K562 (cell line): ENCODE measurements at regions of chr10 and their contacts with region 1.

Region 1: GRCh38 chr10:30013757-30014156 is 45.6 kb downstream of the JCAD start:
- DNase-seq: no peak
- ATAC-seq: no peak
- H3K4me3 ChIP-seq: no peak overlapping the region
- H3K27ac ChIP-seq: no peak overlapping the region
- H3K4me1 ChIP-seq: no peaks in the 10 kb centered on the region
- H3K27me3 ChIP-seq: peaks cover 31 to 32% of the 10 kb centered on the region in 2 experiments; a peak in 4 of 5 replicates
- CTCF ChIP-seq: no peak
- EP300 ChIP-seq: no peak
- POLR2A ChIP-seq: no peak
- RAD21 ChIP-seq: no peak

Region 2: DNA sequence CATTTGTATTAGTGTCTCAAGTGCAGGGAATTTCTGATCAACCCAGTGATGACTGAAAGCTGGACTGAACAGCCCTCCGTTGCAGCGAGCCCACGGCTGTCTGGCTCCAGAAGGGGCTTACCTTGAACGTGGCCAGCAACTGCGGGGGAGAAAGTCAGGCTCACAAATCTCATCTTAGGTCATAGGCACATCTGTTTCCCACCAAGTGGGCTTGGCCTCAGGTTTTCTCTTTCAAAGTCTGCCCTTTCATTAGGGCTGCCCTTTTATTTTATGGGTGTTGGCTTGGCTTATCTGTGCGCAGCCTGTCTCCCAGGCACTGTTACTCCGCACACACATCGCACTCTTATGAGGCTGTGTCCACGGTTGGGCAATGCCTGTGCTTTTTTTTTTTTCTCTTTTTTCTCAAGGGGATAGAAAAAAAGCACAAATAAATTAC is 132.4 kb before region 1 on chr10:
- CTCF ChIA-PET with region 1: no interaction called
- POLR2A ChIA-PET with region 1: no interaction called
- in situ Hi-C with region 1: no loop called
- intact Hi-C with region 1: no loop called
- DNase-seq: no peak
- ATAC-seq: no peak
- H3K4me3 ChIP-seq: no peak overlapping the region
- H3K27ac ChIP-seq: no peak overlapping the region
- H3K4me1 ChIP-seq: no peaks in the 10 kb centered on the region
- H3K27me3 ChIP-seq: peaks cover 0 to 25% of the 10 kb centered on the region in 2 experiments; a peak in 3 of 5 replicates
- CTCF ChIP-seq: no peak
- EP300 ChIP-seq: no peak
- POLR2A ChIP-seq: no peak
- RAD21 ChIP-seq: no peak

Region 3: DNA sequence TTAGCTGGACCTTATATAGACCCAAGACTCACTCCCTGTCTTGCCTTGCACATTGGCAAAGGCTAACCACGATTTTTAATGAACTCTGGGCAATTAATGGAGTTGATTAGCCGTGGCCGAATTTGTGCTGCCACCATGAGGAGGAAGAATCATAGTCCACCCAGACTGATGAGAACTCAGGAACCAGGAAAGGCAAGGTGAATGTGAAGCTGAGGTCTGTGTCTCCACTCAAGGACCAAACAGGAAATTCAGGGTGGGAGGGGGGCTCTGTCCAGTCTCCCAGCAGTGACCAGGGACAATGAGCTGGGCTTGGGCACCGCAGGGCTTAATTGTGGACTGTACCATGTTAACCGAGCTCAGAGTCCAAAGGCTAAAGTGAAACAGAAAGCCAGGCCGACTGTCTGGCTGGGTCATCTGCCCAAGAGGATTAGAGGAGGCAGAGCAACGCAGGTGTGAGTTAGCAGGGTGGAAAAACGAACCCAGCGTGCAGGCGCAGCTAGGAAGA is 172.7 kb after region 1 on chr10:
- CTCF ChIA-PET with region 1: no interaction called
- POLR2A ChIA-PET with region 1: no interaction called
- in situ Hi-C with region 1: no loop called
- intact Hi-C with region 1: loop called (anchors 10 kb)
- DNase-seq: peak in 1 of 4 experiments; percentile 10
- ATAC-seq: no peak
- H3K4me3 ChIP-seq: no peak overlapping the region
- H3K27ac ChIP-seq: no peak overlapping the region
- H3K4me1 ChIP-seq: peaks cover 5 to 7% of the 10 kb centered on the region in 2 experiments; a peak in 3 of 5 replicates
- H3K27me3 ChIP-seq: peaks cover 22 to 45% of the 10 kb centered on the region in 2 experiments
- CTCF ChIP-seq: peak; percentile 23 to 48 (median 31); a peak in 4 of 6 replicates
- EP300 ChIP-seq: no peak
- POLR2A ChIP-seq: no peak
- RAD21 ChIP-seq: peak; percentile 36 to 41